ENCODE measurements at regions of chr3 and their contacts with region 1.

Region 1: GRCh38 chr3:52080830-52081719 is 24.7 kb upstream of the DUSP7 start:
- DNase-seq: peak in 1 of 2 donors; percentile 4
- ATAC-seq: no peak
- H3K4me3 ChIP-seq: no peak overlapping the region
- H3K27ac ChIP-seq: no peak overlapping the region
- H3K4me1 ChIP-seq: no peaks in the 10 kb centered on the region
- H3K27me3 ChIP-seq: no peaks in the 10 kb centered on the region
- CTCF ChIP-seq: no peak

Region 2: DNA sequence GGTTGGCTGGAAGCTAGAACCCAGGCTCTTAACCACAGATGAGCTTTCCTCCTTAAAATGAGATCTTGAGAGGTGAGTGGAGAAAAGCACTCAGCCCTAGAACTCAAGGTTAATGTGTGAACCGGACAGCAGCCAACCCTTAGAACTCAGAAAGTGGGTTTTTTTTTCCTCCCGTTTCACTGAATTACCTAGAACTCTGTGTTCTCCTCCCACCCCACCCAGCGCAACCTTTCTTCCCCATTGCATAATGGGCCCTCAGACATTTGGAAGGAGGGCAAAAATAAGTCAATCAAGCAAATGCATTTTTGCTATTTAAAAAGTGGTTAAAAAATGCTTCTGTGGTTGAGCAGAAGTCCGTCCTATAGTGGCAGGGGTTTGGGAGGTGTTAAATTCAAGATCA is 36.5 kb after region 1 on chr3:
- intact Hi-C with region 1: loop called in 1 of 2 experiments (anchors 2 kb)
- DNase-seq: no peak
- ATAC-seq: no peak
- H3K4me3 ChIP-seq: no peak overlapping the region
- H3K27ac ChIP-seq: no peak overlapping the region
- H3K4me1 ChIP-seq: no peaks in the 10 kb centered on the region
- H3K27me3 ChIP-seq: no peaks in the 10 kb centered on the region
- CTCF ChIP-seq: no peak

Region 3: GRCh38 chr3:52268036-52268435 is 187.0 kb after region 1 on chr3:
- intact Hi-C with region 1: no loop called
- DNase-seq: no peak
- ATAC-seq: peak in 1 of 4 donors; percentile 34
- H3K4me3 ChIP-seq: no peak overlapping the region
- H3K27ac ChIP-seq: no peak overlapping the region
- H3K4me1 ChIP-seq: peaks cover 37% of the 10 kb centered on the region
- H3K27me3 ChIP-seq: no peaks in the 10 kb centered on the region
- CTCF ChIP-seq: no peak

Measured in psoas muscle (tissue), 8 donors.